PC-3 (cell line): ENCODE measurements at regions of chr3 and their contacts with region 1.

Region 1: DNA sequence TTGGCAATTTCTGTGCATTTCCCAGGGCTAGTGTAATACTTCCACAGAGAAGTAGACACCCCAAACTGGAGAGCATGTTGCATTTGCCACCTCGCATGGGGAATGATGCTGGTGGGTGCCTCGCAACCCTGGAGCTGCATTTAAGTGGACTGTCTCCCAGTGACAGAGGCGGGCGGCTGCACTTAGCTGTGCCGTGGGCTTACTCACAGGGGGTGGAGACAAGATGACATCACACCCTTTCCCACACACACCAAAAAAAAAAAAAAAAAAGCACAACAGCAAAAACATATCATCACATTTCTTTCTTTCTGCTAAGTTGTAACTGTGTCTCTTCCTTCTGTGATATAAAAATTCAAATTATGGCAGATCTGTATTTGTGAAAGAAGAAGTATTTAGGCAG is at the start of gene ABI3BP:
- DNase-seq: peak; percentile 84
- ATAC-seq: peak; percentile 89
- H3K4me3 ChIP-seq: peak within 1 kb of the TSS; percentile 66
- H3K27ac ChIP-seq: peak within 1 kb of the TSS; percentile 17
- H3K4me1 ChIP-seq: peaks cover 14% of the 10 kb centered on the region
- H3K27me3 ChIP-seq: no peaks in the 10 kb centered on the region
- CTCF ChIP-seq: no peak
- total RNA-seq, gene ABI3BP: 23.4 and 31.6 TPM in 2 replicates

Region 2: GRCh38 chr3:100653604-100654294 is 339.6 kb before region 1 on chr3:
- CTCF ChIA-PET with region 1: no interaction called
- POLR2A ChIA-PET with region 1: no interaction called
- intact Hi-C with region 1: no loop called
- DNase-seq: no peak
- ATAC-seq: no peak
- H3K4me3 ChIP-seq: no peak overlapping the region
- H3K27ac ChIP-seq: no peak overlapping the region
- H3K4me1 ChIP-seq: peaks cover 24% of the 10 kb centered on the region
- H3K27me3 ChIP-seq: no peaks in the 10 kb centered on the region
- CTCF ChIP-seq: no peak

Region 3: DNA sequence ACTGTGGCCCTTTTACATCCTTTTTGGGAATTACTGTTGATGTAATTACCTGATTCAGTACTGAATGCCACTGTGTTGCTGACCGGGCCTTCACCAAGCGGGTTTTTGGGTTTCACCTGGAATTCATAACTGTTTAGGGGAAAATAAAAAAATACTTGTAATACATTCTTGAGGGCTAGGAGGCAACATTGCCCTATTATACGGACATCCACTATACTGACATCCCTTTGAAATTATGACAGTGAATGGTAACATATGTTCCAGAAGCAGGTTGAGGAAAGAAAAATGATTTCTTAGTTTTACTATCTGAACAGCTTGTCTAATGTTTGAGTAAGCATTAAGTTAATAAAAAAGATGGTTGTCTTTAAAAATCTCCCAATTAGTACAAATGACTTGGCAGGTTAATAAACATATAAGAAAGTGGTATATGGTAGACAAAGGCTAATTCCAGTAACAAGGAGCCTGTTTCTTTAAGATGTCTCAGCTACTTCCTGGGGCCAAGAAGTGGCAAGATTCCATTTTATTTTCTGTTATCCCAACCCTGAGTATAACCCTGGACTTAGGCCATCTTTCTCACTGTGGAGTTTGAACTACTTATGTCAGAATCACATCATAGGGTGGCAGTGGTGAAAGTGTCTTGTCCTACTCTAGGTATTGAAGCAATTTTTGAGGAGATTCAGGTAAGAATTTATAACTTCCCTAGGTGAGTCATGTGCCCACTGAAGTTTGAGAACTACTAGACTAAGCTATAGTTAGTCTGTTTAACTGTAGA is 238.6 kb before region 1 on chr3:
- CTCF ChIA-PET with region 1: no interaction called
- POLR2A ChIA-PET with region 1: no interaction called
- intact Hi-C with region 1: loop called (anchors 1 kb)
- DNase-seq: no peak
- ATAC-seq: peak; percentile 15; the same call in 1 of the 2 replicates
- H3K4me3 ChIP-seq: no peak overlapping the region
- H3K27ac ChIP-seq: no peak overlapping the region
- H3K4me1 ChIP-seq: no peaks in the 10 kb centered on the region
- H3K27me3 ChIP-seq: no peaks in the 10 kb centered on the region
- CTCF ChIP-seq: peak; percentile 40; the same call in 1 of the 2 replicates

Region 4: DNA sequence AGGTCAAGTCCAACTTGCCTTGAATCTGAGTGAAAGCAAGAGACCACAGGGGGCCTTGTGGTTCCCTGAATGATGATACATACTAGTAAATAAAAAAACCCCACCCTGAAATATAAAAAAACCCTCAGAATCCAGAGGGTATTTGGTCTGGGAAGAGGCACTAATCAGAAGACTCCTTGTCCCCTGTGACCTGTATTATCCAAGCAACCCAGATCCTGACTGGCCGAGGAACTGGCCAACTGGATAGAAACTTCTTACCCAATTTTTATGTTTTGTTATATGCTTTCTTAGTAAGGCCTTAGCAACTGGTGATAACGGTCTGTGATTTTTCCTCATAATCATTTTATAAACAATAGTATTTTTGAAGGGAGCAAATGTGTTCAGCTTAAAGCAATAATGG is 17.6 kb before region 1 on chr3:
- CTCF ChIA-PET with region 1: no interaction called
- POLR2A ChIA-PET with region 1: no interaction called
- intact Hi-C with region 1: loop called (anchors 2 kb)
- DNase-seq: no peak
- ATAC-seq: no peak
- H3K4me3 ChIP-seq: no peak overlapping the region
- H3K27ac ChIP-seq: no peak overlapping the region
- H3K4me1 ChIP-seq: peaks cover 22% of the 10 kb centered on the region
- H3K27me3 ChIP-seq: no peaks in the 10 kb centered on the region
- CTCF ChIP-seq: no peak

Region 5: DNA sequence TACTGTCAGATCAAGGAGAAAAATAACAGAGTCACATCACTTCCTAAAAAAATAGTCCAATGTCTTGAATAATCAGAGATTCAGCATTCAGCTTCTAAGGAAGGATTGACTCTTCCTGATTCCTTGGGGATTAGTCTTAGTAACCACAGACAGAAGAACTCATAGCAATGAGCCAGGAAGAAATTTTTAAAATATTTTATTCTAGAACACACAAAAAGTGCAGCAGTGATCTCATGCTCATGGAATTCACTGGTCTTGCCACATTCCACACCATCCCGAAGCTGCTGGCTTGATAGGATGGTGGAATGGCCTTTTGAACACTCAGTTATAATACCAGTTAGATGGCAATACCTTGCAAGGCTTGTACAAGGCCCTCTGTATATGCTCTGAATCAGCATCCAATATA is 42.9 kb after region 1 on chr3:
- CTCF ChIA-PET with region 1: no interaction called
- POLR2A ChIA-PET with region 1: interaction called, 5 read pairs
- intact Hi-C with region 1: loop called (anchors 1 kb)
- DNase-seq: peak; percentile 99
- ATAC-seq: peak; percentile 96
- H3K4me3 ChIP-seq: 0 out of 2 replicates have a peak overlapping the region, but pooled peaks have one; percentile 0
- H3K27ac ChIP-seq: peak overlapping the region; percentile 65
- H3K4me1 ChIP-seq: peaks cover 45% of the 10 kb centered on the region
- H3K27me3 ChIP-seq: no peaks in the 10 kb centered on the region
- CTCF ChIP-seq: no peak

Region 6: GRCh38 chr3:101081999-101082398 is 88.7 kb after region 1 on chr3:
- CTCF ChIA-PET with region 1: no interaction called
- POLR2A ChIA-PET with region 1: no interaction called
- intact Hi-C with region 1: loop called (anchors 2 kb)
- DNase-seq: peak; percentile 64
- ATAC-seq: peak; percentile 77
- H3K4me3 ChIP-seq: no peak overlapping the region
- H3K27ac ChIP-seq: 0 out of 2 replicates have a peak overlapping the region, but pooled peaks have one; percentile 2
- H3K4me1 ChIP-seq: peaks cover 32% of the 10 kb centered on the region
- H3K27me3 ChIP-seq: no peaks in the 10 kb centered on the region
- CTCF ChIP-seq: no peak

Region 7: GRCh38 chr3:101133652-101134051 is 140.3 kb after region 1 on chr3:
- CTCF ChIA-PET with region 1: no interaction called
- POLR2A ChIA-PET with region 1: no interaction called
- intact Hi-C with region 1: no loop called
- DNase-seq: no peak
- ATAC-seq: no peak
- H3K4me3 ChIP-seq: no peak overlapping the region
- H3K27ac ChIP-seq: no peak overlapping the region
- H3K4me1 ChIP-seq: peaks cover 2% of the 10 kb centered on the region; the same call in 1 of the 2 replicates
- H3K27me3 ChIP-seq: no peaks in the 10 kb centered on the region
- CTCF ChIP-seq: no peak

Region 8: DNA sequence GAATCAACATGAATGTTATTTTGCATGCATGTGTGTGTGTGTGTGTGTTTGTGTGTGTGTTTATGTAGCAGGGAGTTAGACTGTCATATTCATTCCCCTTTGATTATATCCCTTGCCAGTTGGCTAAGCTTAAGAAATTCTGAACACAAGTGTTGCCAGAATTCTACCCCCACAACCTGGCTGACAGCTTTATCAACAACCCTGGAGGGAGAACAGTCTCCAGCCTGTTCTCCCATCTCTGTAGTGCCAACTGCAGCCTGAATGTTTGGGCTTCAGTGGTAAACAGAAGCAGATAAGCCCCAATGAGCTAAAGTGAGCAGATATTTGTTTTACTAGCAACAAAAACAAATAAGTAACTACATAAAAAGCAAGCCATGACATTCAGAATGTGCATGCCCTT is 162.5 kb after region 1 on chr3:
- CTCF ChIA-PET with region 1: no interaction called
- POLR2A ChIA-PET with region 1: no interaction called
- intact Hi-C with region 1: no loop called
- DNase-seq: no peak
- ATAC-seq: no peak
- H3K4me3 ChIP-seq: no peak overlapping the region
- H3K27ac ChIP-seq: no peak overlapping the region
- H3K4me1 ChIP-seq: peaks cover 8% of the 10 kb centered on the region; the same call in 1 of the 2 replicates
- H3K27me3 ChIP-seq: no peaks in the 10 kb centered on the region
- CTCF ChIP-seq: no peak